Dorsolateral prefrontal cortex (tissue), 120 donors: ENCODE measurements at regions of chr3 and their contacts with region 1.

Region 1: DNA sequence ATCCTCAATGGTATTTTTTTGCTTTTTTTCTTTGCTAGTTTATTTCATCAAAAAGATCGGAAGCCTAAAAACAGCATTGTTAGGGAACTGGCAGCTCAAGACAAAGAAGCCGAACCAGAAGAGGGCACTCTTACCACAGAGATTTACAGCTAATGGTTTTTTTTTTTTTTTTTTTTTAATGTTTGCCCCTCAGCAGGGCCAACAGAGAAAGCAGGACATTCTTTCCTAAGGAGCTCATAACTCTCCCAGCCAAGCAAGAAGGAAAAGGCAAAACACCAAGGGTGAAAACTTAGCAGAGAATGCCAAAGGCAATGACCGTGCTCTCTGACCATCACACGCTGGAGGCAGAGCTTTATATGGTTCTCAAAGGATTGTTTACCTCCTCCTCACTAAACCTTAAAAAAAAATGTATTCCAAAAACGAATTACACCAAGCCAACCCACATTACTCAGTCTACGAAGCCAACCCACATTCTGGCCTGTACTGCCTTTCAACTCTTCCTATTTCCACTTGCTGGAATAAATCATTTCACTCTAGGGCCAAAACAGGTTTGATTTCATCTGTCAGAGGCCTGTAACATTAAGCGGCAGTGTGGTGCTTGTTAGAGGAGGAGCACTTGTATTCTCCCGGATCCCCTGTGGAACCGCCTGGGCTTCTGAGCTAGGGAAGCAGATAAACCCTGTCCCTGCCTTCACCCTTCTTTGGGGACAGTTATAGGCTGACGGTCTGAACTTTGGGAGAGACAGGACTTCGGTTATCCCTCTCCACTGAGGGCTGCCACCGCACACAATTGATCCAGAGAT is 35.6 kb upstream of the GYG1 start:
- DNase-seq: peak in 2 of 10 donors; percentile 36 to 38
- H3K4me3 ChIP-seq: peak overlapping the region in 1 of 59 donors; percentile 10
- H3K27ac ChIP-seq: peak overlapping the region in 34 of 59 donors; percentile 7 to 82 (median 45)
- H3K27me3 ChIP-seq: no peaks in the 10 kb centered on the region
- CTCF ChIP-seq: peak; percentile 17 to 85 (median 68)

Region 2: DNA sequence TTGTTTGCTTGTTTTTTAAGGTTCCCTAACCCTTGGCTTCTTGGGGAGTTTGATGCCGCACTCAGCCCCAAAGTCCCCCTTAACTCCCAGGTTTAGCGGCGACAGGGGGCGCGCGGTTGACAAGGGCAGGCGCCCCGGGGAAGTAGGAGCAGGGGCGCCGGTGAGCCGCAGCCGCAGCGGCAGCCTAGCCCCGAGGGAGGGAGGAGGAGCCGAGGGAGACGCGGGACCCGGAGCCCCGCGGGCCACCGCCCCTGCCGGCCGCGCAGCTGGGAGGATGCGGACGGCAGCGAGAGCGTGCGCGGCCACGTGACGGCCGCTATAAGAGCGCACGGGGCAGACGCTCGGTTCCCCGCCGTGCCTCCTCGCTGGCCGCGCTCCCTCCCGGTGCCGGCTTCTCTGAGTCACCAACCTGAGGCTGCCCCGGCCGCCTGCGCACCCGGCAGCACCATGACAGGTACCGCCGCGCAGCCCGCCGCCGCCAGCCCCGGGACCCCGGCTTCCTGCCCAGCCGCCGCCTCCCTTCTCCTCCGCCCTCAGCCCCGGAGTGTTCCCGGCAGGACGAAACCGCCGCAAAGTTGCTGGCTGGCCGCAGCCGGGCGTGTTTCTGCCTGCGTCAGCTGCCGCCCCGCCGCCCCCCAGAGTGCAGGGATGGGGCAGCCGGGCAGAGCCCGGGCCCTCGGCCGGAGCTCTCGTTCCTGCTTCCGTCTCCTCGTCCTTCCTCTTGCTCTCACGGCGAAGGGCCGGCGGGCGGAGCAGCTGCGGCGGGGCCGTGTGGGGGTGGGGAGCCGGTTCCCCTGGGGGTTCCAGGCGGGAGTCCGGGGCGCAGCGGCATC is 35.7 kb after region 1 on chr3 and contains the start of gene GYG1:
- intact Hi-C with region 1: loop called in 1 of 2 experiments (anchors 5 kb)
- DNase-seq: peak; percentile 60 to 89 (median 74)
- H3K4me3 ChIP-seq: peak within 1 kb of the TSS; percentile 67 to 99 (median 90)
- H3K27ac ChIP-seq: peak within 1 kb of the TSS in 58 of 59 donors; percentile 41 to 97 (median 86)
- H3K27me3 ChIP-seq: no peaks in the 10 kb centered on the region
- CTCF ChIP-seq: peak in 54 of 56 donors; percentile 22 to 75 (median 50)
- total RNA-seq, gene GYG1: 10.1 to 70.8 (median 37.8) TPM

Region 3: GRCh38 chr3:149086232-149086988 is 130.7 kb after region 1 on chr3 and contains the start of gene HLTF:
- intact Hi-C with region 1: loop called in 1 of 2 experiments (anchors 10 kb)
- DNase-seq: peak; percentile 90 to 97 (median 95)
- H3K4me3 ChIP-seq: peak within 1 kb of the TSS; percentile 45 to 97 (median 85)
- H3K27ac ChIP-seq: peak within 1 kb of the TSS in 56 of 59 donors; percentile 0 to 91 (median 79)
- H3K27me3 ChIP-seq: no peaks in the 10 kb centered on the region
- CTCF ChIP-seq: peak in 17 of 56 donors; percentile 2 to 37 (median 13)
- total RNA-seq, gene HLTF: 29.5 to 74.9 (median 50.5) TPM

Region 4: GRCh38 chr3:149114458-149114857 is 158.7 kb after region 1 on chr3:
- intact Hi-C with region 1: loop called in 1 of 2 experiments (anchors 5 kb)
- DNase-seq: no peak
- H3K4me3 ChIP-seq: no peak overlapping the region
- H3K27ac ChIP-seq: no peak overlapping the region
- H3K27me3 ChIP-seq: no peaks in the 10 kb centered on the region
- CTCF ChIP-seq: no peak

Region 5: DNA sequence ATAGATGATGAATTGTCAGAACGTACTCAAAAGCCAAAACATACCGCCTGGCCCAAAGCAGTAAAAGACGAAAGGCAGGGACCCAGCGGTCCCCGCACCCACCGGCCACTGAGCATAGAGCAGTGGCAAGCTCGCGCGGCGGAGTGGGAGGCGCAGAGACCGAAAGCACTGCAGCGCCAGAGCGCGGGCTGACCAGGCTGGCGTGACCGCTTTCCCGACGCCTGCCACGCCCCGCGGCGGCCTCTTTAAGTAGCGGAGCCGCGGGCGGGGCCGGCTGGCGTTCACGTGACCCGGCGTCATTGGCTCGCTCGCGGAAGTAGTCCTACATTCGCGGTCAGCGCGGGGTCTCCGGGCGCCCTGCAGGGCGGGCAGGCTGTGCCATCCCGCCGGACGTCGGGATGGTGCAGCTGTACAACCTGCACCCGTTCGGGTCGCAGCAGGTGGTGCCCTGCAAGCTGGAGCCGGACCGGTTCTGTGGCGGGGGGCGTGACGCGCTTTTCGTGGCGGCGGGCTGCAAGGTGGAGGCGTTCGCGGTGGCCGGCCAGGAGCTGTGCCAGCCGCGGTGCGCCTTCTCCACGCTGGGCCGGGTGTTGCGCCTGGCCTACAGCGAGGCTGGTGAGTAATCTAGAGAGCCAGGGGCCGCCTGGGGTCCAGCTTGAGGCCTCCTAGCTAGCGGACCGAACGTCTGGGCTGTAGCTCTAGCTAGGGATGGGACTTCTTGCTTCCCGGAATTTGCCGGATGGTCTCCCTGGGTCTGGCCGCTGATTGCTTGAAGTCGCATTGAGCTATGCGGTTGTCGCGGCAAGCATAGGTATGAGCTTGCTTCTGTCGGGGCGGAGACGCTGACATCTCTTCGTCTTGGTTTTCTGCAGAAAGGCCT is 173.8 kb after region 1 on chr3 and contains the start of gene HPS3:
- intact Hi-C with region 1: loop called in 1 of 2 experiments (anchors 10 kb)
- DNase-seq: peak; percentile 89 to 94 (median 92)
- H3K4me3 ChIP-seq: peak within 1 kb of the TSS; percentile 63 to 99 (median 94)
- H3K27ac ChIP-seq: peak within 1 kb of the TSS; percentile 20 to 95 (median 82)
- H3K27me3 ChIP-seq: no peaks in the 10 kb centered on the region
- CTCF ChIP-seq: peak in 45 of 56 donors; percentile 11 to 62 (median 41)
- total RNA-seq, gene HPS3: 12.3 to 28.4 (median 19.4) TPM

Region 6: GRCh38 chr3:149273096-149273751 is 317.5 kb after region 1 on chr3:
- intact Hi-C with region 1: loop called (anchors 1 to 5 kb)
- DNase-seq: peak in 2 of 10 donors; percentile 36 to 45
- H3K4me3 ChIP-seq: no peak overlapping the region
- H3K27ac ChIP-seq: no peak overlapping the region
- H3K27me3 ChIP-seq: no peaks in the 10 kb centered on the region
- CTCF ChIP-seq: peak; percentile 87 to 100 (median 96)

Region 7: GRCh38 chr3:149299938-149300791 is 344.4 kb after region 1 on chr3:
- intact Hi-C with region 1: no loop called
- DNase-seq: no peak
- H3K4me3 ChIP-seq: no peak overlapping the region
- H3K27ac ChIP-seq: peak overlapping the region in 1 of 59 donors; percentile 24
- H3K27me3 ChIP-seq: peaks cover 0 to 4% (median 0%) of the 10 kb centered on the region in 45 donors
- CTCF ChIP-seq: no peak

Region 8: GRCh38 chr3:149339931-149340309 is 384.2 kb after region 1 on chr3:
- intact Hi-C with region 1: loop called in 1 of 2 experiments (anchors 10 kb)
- DNase-seq: no peak
- H3K4me3 ChIP-seq: no peak overlapping the region
- H3K27ac ChIP-seq: peak overlapping the region in 31 of 59 donors; percentile 10 to 81 (median 49)
- H3K27me3 ChIP-seq: peaks cover 0 to 26% (median 3%) of the 10 kb centered on the region in 45 donors
- CTCF ChIP-seq: no peak